Left ventricle myocardium superior (tissue), 1 donor: ENCODE measurements at regions of chr3 and their contacts with region 1.

Region 1: GRCh38 chr3:58568572-58569286 is 8.5 kb downstream of the FAM107A start:
- DNase-seq: peak; percentile 86
- ATAC-seq: peak; percentile 59

Region 2: GRCh38 chr3:58628823-58629562 is 60.3 kb after region 1 on chr3:
- intact Hi-C with region 1: loop called (anchors 2 kb)
- DNase-seq: peak; percentile 50
- ATAC-seq: peak; percentile 6